ENCODE measurements at regions of chr5 and their contacts with region 1.

Region 1: GRCh38 chr5:95858661-95859326 is 36.3 kb upstream of the GLRX start:
- DNase-seq: peak; percentile 98
- H3K4me3 ChIP-seq: peak overlapping the region; percentile 28
- H3K27ac ChIP-seq: peak overlapping the region; percentile 100
- H3K27me3 ChIP-seq: no peaks in the 10 kb centered on the region
- CTCF ChIP-seq: peak; percentile 98

Region 2: GRCh38 chr5:95808686-95809413 is 49.9 kb before region 1 on chr5:
- CTCF ChIA-PET with region 1: no interaction called
- POLR2A ChIA-PET with region 1: no interaction called
- DNase-seq: no peak
- H3K4me3 ChIP-seq: no peak overlapping the region
- H3K27ac ChIP-seq: peak overlapping the region; percentile 55
- H3K27me3 ChIP-seq: no peaks in the 10 kb centered on the region
- CTCF ChIP-seq: no peak

Region 3: GRCh38 chr5:95835682-95836385 is 23.0 kb before region 1 on chr5:
- CTCF ChIA-PET with region 1: no interaction called
- POLR2A ChIA-PET with region 1: no interaction called
- DNase-seq: no peak
- H3K4me3 ChIP-seq: no peak overlapping the region
- H3K27ac ChIP-seq: no peak overlapping the region
- H3K27me3 ChIP-seq: no peaks in the 10 kb centered on the region
- CTCF ChIP-seq: no peak

Region 4: DNA sequence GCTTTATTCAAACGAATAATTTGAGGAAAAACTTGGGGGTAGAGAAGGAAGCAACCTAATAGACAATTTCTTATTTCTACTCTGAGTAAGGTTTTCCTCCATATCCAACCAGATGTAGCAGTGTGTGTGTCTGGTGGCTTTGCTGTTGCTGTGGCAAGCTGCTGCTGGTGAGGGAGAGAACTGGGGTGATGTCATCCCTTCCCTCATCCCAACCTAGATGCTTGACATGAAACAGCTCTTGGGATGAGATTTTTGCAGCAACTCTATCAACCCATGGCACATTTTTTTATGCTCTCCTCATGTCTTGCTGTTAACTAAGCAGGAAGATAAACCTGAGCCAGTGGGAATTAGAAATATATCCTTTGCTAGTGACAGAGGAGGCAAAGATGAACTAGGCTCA is 438.5 kb after region 1 on chr5:
- CTCF ChIA-PET with region 1: no interaction called
- POLR2A ChIA-PET with region 1: interaction called, 10 read pairs
- DNase-seq: peak; percentile 89
- H3K4me3 ChIP-seq: no peak overlapping the region
- H3K27ac ChIP-seq: peak overlapping the region; percentile 85
- H3K27me3 ChIP-seq: no peaks in the 10 kb centered on the region
- CTCF ChIP-seq: no peak

Measured in AG04450 (cell line).